ENCODE measurements at regions of chr11 and their contacts with region 1.

Region 1: DNA sequence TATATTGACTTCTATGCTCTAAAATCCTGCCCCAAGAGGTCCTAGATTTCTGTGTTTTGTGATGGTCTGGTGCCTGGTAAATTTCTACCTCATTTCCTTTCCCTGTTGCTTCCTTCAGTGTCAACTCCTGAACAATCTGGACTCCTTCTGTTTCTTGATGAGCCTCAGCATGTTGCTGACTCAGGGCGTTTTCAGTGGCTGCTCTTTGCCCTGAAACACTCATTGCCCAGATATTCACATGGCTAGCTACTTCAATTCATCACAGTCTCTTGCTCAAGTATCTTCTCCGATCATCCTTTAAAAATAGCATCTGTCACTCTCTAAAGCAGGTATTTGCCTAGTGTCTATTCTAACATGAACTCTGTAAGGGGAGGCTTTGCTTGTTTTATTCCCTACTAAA is 526.3 kb upstream of the RAG2 start:
- DNase-seq: no peak
- H3K4me3 Mint-ChIP-seq: no peak overlapping the region
- H3K27ac Mint-ChIP-seq: no peak overlapping the region
- H3K4me1 Mint-ChIP-seq: no peaks in the 10 kb centered on the region
- H3K27me3 Mint-ChIP-seq: no peaks in the 10 kb centered on the region
- CTCF ChIP-seq: no peak

Region 2: DNA sequence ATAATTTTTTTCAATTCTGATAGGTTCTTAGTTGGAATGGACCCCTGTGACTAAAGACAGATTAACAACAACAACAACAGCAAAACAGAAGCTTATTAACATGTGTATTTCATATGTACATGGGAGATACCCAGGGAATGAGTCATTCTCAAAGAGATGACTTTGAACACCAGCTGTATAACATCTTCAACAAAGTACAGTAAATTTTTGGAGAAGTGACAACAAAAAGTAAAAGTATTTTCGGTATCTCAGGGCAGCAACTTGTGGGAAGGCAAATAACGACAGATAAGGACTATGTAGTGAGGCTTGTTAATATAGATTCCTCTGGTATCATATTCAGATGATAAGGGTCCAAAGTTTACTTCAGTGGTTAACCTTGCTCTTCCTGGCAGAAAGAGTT is 47.1 kb after region 1 on chr11:
- CTCF ChIA-PET with region 1: no interaction called
- intact Hi-C with region 1: loop called (anchors 5 kb)
- DNase-seq: no peak
- H3K4me3 Mint-ChIP-seq: no peak overlapping the region
- H3K27ac Mint-ChIP-seq: no peak overlapping the region
- H3K4me1 Mint-ChIP-seq: no peaks in the 10 kb centered on the region
- H3K27me3 Mint-ChIP-seq: no peaks in the 10 kb centered on the region
- CTCF ChIP-seq: no peak

Region 3: DNA sequence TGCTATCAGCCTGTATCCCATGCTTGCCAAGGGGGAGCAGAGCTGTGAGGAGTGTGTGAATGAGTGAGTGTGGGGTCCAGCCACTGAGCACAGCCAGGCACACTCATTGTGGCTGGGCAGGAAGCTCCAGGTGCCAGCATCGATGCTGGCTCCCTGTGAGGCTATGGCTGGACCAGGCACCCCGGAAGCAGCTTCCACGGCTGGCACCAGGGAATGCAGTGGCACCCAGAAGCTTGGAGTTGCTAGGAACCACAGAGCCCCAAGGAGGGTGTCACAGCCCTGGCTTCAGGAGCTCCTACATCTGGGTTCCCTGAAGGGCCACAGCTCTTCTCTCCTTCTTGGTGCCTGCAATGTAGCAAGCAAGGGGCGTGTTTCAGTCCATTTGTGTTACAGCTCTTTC is 99.6 kb after region 1 on chr11:
- CTCF ChIA-PET with region 1: no interaction called
- intact Hi-C with region 1: no loop called
- DNase-seq: no peak
- H3K4me3 Mint-ChIP-seq: no peak overlapping the region
- H3K27ac Mint-ChIP-seq: no peak overlapping the region
- H3K4me1 Mint-ChIP-seq: no peaks in the 10 kb centered on the region
- H3K27me3 Mint-ChIP-seq: no peaks in the 10 kb centered on the region
- CTCF ChIP-seq: no peak